Naive thymus-derived CD4-positive, alpha-beta T cell (primary cell): ENCODE measurements at regions of chr1 and their contacts with region 1.

Region 1: DNA sequence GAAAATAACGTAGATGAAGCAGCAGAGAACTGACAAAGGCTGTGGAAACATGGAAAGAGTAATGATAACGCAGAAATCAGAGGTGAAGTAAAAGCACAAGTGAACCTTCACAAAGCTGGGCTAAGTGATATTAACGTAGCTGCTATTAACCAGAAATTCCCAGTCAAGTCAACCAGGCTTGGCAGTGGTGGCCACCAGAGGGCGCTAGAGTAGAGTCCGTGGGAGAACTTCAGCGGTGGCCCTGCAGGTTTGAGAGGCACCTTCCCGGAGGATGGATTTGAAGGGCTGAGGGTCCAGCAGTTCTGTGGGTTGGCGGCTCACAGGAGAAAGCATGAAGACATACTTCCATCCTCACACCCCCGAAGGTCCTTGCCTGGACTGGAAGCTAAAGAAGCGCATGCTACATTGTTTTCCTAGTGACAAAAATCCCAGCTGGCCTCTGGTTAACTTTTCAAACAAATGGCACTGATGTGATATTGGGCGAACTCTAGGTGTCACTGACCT is 81.7 kb upstream of the ZNF648 start:
- DNase-seq: peak; percentile 62 to 90 (median 80)
- ATAC-seq: peak; percentile 75
- H3K4me3 ChIP-seq: no peak overlapping the region
- H3K4me3 Mint-ChIP-seq: no peak overlapping the region
- H3K27ac ChIP-seq: no peak overlapping the region
- H3K27ac Mint-ChIP-seq: peak overlapping the region in 3 of 9 donors; percentile 5 to 8 (median 5)
- H3K4me1 ChIP-seq: no peaks in the 10 kb centered on the region
- H3K4me1 Mint-ChIP-seq: peaks cover 6 to 37% (median 11%) of the 10 kb centered on the region in 7 donors
- H3K27me3 ChIP-seq: no peaks in the 10 kb centered on the region
- H3K27me3 Mint-ChIP-seq: peaks cover 0 to 12% (median 5%) of the 10 kb centered on the region in 5 donors

Region 2: DNA sequence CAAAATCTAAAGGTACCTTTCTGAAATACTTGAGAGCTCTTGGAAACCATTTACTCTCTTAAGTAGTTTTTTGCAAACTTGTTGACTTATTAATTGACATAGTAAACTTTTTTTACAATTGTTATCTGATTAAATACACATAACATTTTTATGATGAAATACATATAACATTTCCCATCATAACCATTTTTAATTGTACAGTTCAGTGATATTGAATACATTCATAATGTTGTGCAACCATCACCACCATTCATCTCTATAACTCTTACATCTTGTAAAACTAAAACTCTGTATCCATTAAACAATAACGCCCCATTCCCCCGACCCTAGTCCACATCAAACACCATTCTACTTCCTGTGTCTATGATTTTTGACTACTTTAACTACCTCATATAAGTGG is 14.0 kb after region 1 on chr1:
- CTCF ChIA-PET with region 1: interaction called, 14 read pairs
- POLR2A ChIA-PET with region 1: interaction called, 3 read pairs
- intact Hi-C with region 1: no loop called
- DNase-seq: no peak
- ATAC-seq: no peak
- H3K4me3 ChIP-seq: no peak overlapping the region
- H3K4me3 Mint-ChIP-seq: no peak overlapping the region
- H3K27ac ChIP-seq: no peak overlapping the region
- H3K27ac Mint-ChIP-seq: no peak overlapping the region
- H3K4me1 ChIP-seq: no peaks in the 10 kb centered on the region
- H3K4me1 Mint-ChIP-seq: peaks cover 0 to 16% (median 0%) of the 10 kb centered on the region in 7 donors
- H3K27me3 ChIP-seq: no peaks in the 10 kb centered on the region
- H3K27me3 Mint-ChIP-seq: peaks cover 0 to 9% (median 3%) of the 10 kb centered on the region in 5 donors

Region 3: DNA sequence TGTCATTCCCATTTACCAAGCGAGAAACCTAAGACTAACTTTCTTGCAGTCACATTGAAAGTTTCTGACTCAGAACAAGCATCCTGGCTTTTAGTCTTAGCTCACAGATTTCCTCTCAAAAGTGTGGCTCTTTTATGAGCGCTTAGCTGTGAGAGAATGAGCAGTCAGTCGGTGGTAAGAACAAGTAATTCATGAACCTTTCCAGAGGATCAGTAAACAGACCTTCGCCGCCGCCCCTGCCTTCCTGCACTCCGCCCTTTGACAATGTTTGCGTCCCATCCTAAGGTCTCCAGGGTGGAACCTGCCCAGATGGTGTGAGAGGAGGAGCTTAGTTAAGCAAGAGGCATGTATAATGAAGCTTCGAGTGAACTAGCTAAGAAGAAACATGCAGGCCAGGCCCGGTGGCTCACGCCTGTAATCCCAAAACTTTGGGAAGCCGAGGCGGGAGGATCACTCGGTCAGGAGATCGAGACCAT is 106.0 kb after region 1 on chr1:
- CTCF ChIA-PET with region 1: interaction called, 3 read pairs
- POLR2A ChIA-PET with region 1: no interaction called
- intact Hi-C with region 1: loop called in 1 of 2 experiments (anchors 5 kb)
- DNase-seq: peak in 1 of 9 donors; percentile 52
- ATAC-seq: no peak
- H3K4me3 ChIP-seq: no peak overlapping the region
- H3K4me3 Mint-ChIP-seq: peak overlapping the region in 2 of 10 donors; percentile 30 to 33
- H3K27ac ChIP-seq: no peak overlapping the region
- H3K27ac Mint-ChIP-seq: peak overlapping the region in 2 of 9 donors; percentile 20 to 82
- H3K4me1 ChIP-seq: peaks cover 0 to 7% of the 10 kb centered on the region in 2 donors
- H3K4me1 Mint-ChIP-seq: peaks cover 0 to 16% (median 4%) of the 10 kb centered on the region in 7 donors
- H3K27me3 ChIP-seq: no peaks in the 10 kb centered on the region
- H3K27me3 Mint-ChIP-seq: no peaks in the 10 kb centered on the region

Region 4: DNA sequence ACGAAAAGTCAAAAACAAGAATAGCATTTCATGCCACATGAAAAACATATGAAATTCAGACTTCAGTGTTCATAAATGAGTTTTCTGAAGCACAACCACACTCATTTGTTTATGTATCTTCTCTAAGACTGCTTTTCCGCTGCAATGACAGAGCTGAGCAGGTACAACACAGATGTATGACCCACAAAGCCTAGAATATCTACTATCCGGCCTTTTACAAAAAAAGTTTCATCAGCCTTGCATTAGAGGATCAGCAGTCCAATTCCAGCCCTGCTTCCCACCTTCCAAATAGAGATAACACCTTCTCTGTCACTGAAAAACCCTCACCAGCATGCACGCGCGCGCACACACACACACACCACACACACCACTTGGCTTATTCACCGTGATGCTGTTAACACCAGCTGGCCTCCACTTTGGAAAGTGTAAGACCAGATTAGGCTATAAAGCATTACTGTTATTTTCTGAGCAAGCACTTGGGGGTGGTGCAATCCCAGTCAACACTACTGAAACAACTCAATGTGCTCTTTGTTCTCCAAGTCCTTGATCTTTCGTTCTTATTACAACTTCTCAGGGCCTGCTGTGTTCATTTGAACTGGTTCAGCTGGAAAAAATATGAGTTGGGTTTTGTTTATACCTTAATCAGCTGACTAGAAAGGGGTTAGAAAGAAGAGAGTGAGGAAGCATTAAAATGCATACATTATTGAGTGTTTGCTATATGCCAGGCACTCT is 158.4 kb after region 1 on chr1:
- CTCF ChIA-PET with region 1: no interaction called
- POLR2A ChIA-PET with region 1: no interaction called
- intact Hi-C with region 1: loop called in 1 of 2 experiments (anchors 5 kb)
- DNase-seq: peak in 5 of 9 donors; percentile 17 to 31 (median 27)
- ATAC-seq: peak; percentile 26
- H3K4me3 ChIP-seq: no peak overlapping the region
- H3K4me3 Mint-ChIP-seq: no peak overlapping the region
- H3K27ac ChIP-seq: peak overlapping the region; percentile 20
- H3K27ac Mint-ChIP-seq: peak overlapping the region in 8 of 9 donors; percentile 15 to 94 (median 64)
- H3K4me1 ChIP-seq: peaks cover 0 to 6% of the 10 kb centered on the region in 2 donors
- H3K4me1 Mint-ChIP-seq: peaks cover 17 to 31% (median 28%) of the 10 kb centered on the region in 7 donors
- H3K27me3 ChIP-seq: no peaks in the 10 kb centered on the region
- H3K27me3 Mint-ChIP-seq: no peaks in the 10 kb centered on the region

Region 5: DNA sequence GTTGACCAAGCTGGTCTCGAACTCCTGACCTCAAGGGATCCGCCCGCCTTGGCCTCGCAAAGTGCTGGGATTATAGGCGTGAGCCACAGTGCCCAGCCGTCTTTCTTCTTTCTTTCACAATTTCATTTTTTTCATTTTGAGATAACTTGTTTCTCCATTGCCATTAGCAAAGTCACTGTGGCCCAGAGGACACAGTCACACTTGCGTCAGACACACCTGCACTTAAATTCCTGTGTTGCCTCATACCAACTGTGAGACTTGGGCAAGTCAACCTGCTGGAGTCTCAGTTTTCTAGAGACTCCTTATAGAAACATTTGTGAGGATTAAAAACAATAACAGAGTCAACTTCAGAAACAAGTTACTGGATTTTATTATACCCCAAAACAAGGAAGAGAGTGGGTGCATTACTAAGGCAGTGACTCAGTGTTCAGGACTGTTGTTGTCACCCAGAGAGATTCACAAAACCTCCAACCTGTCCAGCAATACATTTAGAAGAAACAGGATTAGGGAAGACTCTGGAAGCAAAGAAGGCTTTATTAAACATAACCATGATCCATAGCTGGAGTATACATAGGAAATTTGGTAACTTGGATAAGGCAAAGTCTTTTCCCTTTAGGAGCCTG is 254.7 kb after region 1 on chr1:
- CTCF ChIA-PET with region 1: interaction called, 202 read pairs
- POLR2A ChIA-PET with region 1: interaction called, 16 read pairs
- intact Hi-C with region 1: loop called (anchors 1 kb)
- DNase-seq: no peak
- ATAC-seq: no peak
- H3K4me3 ChIP-seq: no peak overlapping the region
- H3K4me3 Mint-ChIP-seq: no peak overlapping the region
- H3K27ac ChIP-seq: no peak overlapping the region
- H3K27ac Mint-ChIP-seq: no peak overlapping the region
- H3K4me1 ChIP-seq: no peaks in the 10 kb centered on the region
- H3K4me1 Mint-ChIP-seq: peaks cover 5 to 11% (median 6%) of the 10 kb centered on the region in 7 donors
- H3K27me3 ChIP-seq: no peaks in the 10 kb centered on the region
- H3K27me3 Mint-ChIP-seq: peaks cover 0 to 28% (median 0%) of the 10 kb centered on the region in 5 donors